MCF 10A (cell line): ENCODE measurements at regions of chr12 and their contacts with region 1.

Region 1: DNA sequence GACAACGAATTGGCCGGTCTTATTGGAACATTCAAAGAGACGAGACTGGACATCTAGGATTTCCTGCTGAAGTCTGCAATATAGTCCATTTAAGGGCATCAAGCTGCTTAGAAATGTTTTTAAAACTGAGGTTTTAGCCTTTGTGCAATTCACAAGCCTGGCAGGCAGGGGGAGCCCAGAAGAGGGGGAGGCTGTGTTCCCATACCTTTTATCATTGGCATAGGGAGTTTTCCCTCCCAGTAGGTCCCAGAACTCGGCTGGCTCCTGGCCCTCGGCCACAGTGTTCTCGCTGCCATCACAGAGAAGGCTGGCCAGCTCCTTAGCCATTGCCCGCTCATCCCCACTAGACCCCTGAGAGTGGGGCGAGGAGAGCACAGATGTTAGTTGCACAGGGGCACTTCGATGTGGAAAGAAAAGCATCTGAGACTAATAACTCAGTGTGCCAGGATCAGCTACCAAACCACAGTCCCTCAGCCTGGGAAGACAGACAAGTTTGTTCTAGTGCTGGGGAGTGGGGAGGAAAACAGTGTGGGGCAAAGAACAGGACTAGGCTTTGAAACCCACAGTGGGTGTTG is 15.1 kb downstream of the AVIL start:
- DNase-seq: peak; percentile 61
- H3K4me3 Mint-ChIP-seq: no peak overlapping the region
- H3K27ac Mint-ChIP-seq: no peak overlapping the region
- H3K4me1 Mint-ChIP-seq: no peaks in the 10 kb centered on the region
- H3K27me3 Mint-ChIP-seq: no peaks in the 10 kb centered on the region
- CTCF ChIP-seq: peak; percentile 84

Region 2: DNA sequence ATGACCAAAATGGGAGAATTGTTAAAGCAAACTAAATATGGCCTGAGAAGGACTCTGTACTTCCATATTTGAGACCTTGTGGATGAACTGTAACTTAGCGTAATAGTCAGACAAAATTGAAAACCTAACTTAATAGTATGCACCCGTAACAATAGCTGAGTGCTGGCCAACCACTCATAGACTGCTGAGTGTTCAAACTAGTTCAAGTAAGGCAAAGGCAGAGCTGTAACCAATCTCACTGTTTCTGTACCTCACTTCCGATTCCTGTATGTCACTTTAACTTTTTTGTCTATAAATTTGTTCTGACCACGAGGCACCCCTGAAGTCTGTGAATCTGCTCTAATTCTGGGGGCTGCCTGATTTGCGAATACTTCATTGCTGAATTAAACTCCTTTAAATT is 136.5 kb before region 1 on chr12:
- CTCF ChIA-PET with region 1: no interaction called
- POLR2A ChIA-PET with region 1: no interaction called
- intact Hi-C with region 1: no loop called
- DNase-seq: no peak
- H3K4me3 Mint-ChIP-seq: no peak overlapping the region
- H3K27ac Mint-ChIP-seq: no peak overlapping the region
- H3K4me1 Mint-ChIP-seq: no peaks in the 10 kb centered on the region
- H3K27me3 Mint-ChIP-seq: no peaks in the 10 kb centered on the region
- CTCF ChIP-seq: no peak

Region 3: GRCh38 chr12:57815177-57816000 is 12.0 kb after region 1 on chr12:
- CTCF ChIA-PET with region 1: interaction called, 27 read pairs
- POLR2A ChIA-PET with region 1: interaction called, 3 read pairs
- intact Hi-C with region 1: no loop called
- DNase-seq: no peak
- H3K4me3 Mint-ChIP-seq: no peak overlapping the region
- H3K27ac Mint-ChIP-seq: no peak overlapping the region
- H3K4me1 Mint-ChIP-seq: peaks cover 10% of the 10 kb centered on the region
- H3K27me3 Mint-ChIP-seq: no peaks in the 10 kb centered on the region
- CTCF ChIP-seq: no peak

Region 4: GRCh38 chr12:57836442-57837375 is 33.3 kb after region 1 on chr12:
- CTCF ChIA-PET with region 1: interaction called, 12 read pairs
- POLR2A ChIA-PET with region 1: no interaction called
- intact Hi-C with region 1: loop called (anchors 1 kb)
- DNase-seq: peak; percentile 60
- H3K4me3 Mint-ChIP-seq: peak overlapping the region; percentile 46
- H3K27ac Mint-ChIP-seq: peak overlapping the region; percentile 59
- H3K4me1 Mint-ChIP-seq: peaks cover 41% of the 10 kb centered on the region
- H3K27me3 Mint-ChIP-seq: no peaks in the 10 kb centered on the region
- CTCF ChIP-seq: no peak

Region 5: DNA sequence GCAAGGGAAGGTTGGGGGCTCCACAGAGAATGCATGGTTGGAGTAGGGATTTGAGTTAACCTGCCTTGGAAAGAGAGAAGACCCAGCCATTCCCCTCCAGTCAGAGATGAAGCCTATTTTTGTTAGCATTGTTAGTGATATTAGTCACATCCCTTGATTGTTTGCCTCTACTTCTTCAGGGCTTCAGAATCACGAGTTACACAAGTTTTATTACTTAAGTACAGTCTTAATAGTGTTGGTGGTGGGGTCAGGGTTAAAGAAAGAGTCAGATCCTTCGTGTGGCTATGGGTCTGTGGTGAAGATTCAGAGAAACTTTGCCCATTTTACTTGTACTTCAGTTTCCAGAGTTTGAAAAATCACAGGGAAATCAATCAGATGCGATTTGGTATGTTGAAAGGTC is 753.8 kb after region 1 on chr12:
- CTCF ChIA-PET with region 1: no interaction called
- POLR2A ChIA-PET with region 1: no interaction called
- intact Hi-C with region 1: no loop called
- DNase-seq: peak; percentile 30
- H3K4me3 Mint-ChIP-seq: no peak overlapping the region
- H3K27ac Mint-ChIP-seq: no peak overlapping the region
- H3K4me1 Mint-ChIP-seq: peaks cover 5% of the 10 kb centered on the region
- H3K27me3 Mint-ChIP-seq: no peaks in the 10 kb centered on the region
- CTCF ChIP-seq: no peak